Naive thymus-derived CD4-positive, alpha-beta T cell (primary cell): ENCODE measurements at regions of chr3 and their contacts with region 1.

Region 1: GRCh38 chr3:27659279-27660021 is 62.7 kb downstream of the EOMES start:
- DNase-seq: peak in 5 of 9 donors; percentile 23 to 42 (median 33)
- ATAC-seq: peak; percentile 74
- H3K4me3 ChIP-seq: no peak overlapping the region
- H3K4me3 Mint-ChIP-seq: no peak overlapping the region
- H3K27ac ChIP-seq: no peak overlapping the region
- H3K27ac Mint-ChIP-seq: no peak overlapping the region
- H3K4me1 ChIP-seq: no peaks in the 10 kb centered on the region
- H3K4me1 Mint-ChIP-seq: peaks cover 0 to 6% (median 0%) of the 10 kb centered on the region in 7 donors
- H3K27me3 ChIP-seq: no peaks in the 10 kb centered on the region
- H3K27me3 Mint-ChIP-seq: peaks cover 0 to 8% (median 0%) of the 10 kb centered on the region in 5 donors

Region 2: DNA sequence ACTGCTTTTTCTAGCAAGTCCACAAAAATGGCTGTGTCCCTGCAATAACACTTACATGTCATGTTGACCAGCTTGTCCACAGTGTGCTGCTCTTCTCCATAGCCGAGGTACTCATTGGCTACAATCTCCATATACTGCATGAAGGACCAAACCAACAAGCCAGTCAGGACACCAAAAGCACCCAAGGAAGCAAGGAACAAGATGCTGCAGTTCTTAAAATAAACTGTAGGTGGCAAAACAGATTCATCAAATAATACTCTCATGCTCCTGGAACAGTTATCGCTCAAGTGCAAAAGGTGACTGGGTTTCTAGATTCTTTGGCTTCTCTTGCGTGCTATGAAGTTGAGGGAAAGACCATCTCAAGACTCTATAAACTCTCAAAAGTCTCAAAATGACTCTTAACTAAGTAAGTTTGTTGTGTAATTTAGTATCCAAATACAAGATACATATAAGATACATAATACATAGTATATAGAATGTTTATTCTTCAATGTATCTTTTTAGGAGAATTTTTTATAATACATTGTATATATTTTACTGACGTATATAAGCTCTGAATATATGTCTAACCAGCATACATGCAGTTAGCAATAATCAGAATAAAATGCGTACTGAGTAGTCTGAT is 347.3 kb before region 1 on chr3:
- CTCF ChIA-PET with region 1: interaction called, 4 read pairs
- POLR2A ChIA-PET with region 1: no interaction called
- intact Hi-C with region 1: loop called in 1 of 2 experiments (anchors 1 kb)
- DNase-seq: peak in 7 of 9 donors; percentile 18 to 61 (median 44)
- ATAC-seq: peak; percentile 70
- H3K4me3 ChIP-seq: no peak overlapping the region
- H3K4me3 Mint-ChIP-seq: no peak overlapping the region
- H3K27ac ChIP-seq: no peak overlapping the region
- H3K27ac Mint-ChIP-seq: no peak overlapping the region
- H3K4me1 ChIP-seq: no peaks in the 10 kb centered on the region
- H3K4me1 Mint-ChIP-seq: peaks cover 0 to 4% (median 0%) of the 10 kb centered on the region in 7 donors
- H3K27me3 ChIP-seq: no peaks in the 10 kb centered on the region
- H3K27me3 Mint-ChIP-seq: peaks cover 0 to 20% (median 8%) of the 10 kb centered on the region in 5 donors

Region 3: GRCh38 chr3:27357665-27358258 is 301.7 kb before region 1 on chr3:
- CTCF ChIA-PET with region 1: no interaction called
- POLR2A ChIA-PET with region 1: no interaction called
- intact Hi-C with region 1: loop called in 1 of 2 experiments (anchors 1 kb)
- DNase-seq: peak in 8 of 9 donors; percentile 19 to 56 (median 41)
- ATAC-seq: peak; percentile 93
- H3K4me3 ChIP-seq: no peak overlapping the region
- H3K4me3 Mint-ChIP-seq: no peak overlapping the region
- H3K27ac ChIP-seq: no peak overlapping the region
- H3K27ac Mint-ChIP-seq: no peak overlapping the region
- H3K4me1 ChIP-seq: peaks cover 13 to 18% of the 10 kb centered on the region in 2 donors
- H3K4me1 Mint-ChIP-seq: peaks cover 0 to 31% (median 25%) of the 10 kb centered on the region in 7 donors
- H3K27me3 ChIP-seq: no peaks in the 10 kb centered on the region
- H3K27me3 Mint-ChIP-seq: peaks cover 0 to 20% (median 0%) of the 10 kb centered on the region in 5 donors

Region 4: DNA sequence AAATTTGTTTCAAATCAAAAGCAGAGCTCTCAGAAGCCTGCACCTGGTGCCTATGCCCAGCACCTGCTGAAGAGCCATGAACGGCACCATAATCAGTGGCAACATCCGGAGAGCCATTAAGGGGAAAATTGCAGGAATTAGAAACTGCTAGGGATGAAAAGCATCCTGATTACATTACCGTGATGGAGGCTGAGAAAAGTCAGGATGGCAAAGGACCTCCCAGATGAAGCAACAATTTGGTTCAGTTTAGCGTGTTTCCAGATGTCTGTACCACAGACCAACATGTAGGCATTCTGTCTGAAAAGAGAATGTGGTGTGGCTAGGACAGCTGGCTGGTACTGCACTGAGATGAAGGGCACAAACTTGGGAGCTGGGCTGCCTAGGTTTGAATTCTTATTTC is 43.4 kb before region 1 on chr3:
- CTCF ChIA-PET with region 1: no interaction called
- POLR2A ChIA-PET with region 1: no interaction called
- intact Hi-C with region 1: loop called in 1 of 2 experiments (anchors 5 kb)
- DNase-seq: no peak
- ATAC-seq: no peak
- H3K4me3 ChIP-seq: no peak overlapping the region
- H3K4me3 Mint-ChIP-seq: no peak overlapping the region
- H3K27ac ChIP-seq: no peak overlapping the region
- H3K27ac Mint-ChIP-seq: no peak overlapping the region
- H3K4me1 ChIP-seq: no peaks in the 10 kb centered on the region
- H3K4me1 Mint-ChIP-seq: peaks cover 0 to 2% (median 0%) of the 10 kb centered on the region in 7 donors
- H3K27me3 ChIP-seq: no peaks in the 10 kb centered on the region
- H3K27me3 Mint-ChIP-seq: peaks cover 0 to under 1% (median 0%) of the 10 kb centered on the region in 5 donors

Region 5: GRCh38 chr3:27632431-27633223 is 26.8 kb before region 1 on chr3:
- CTCF ChIA-PET with region 1: no interaction called
- POLR2A ChIA-PET with region 1: no interaction called
- intact Hi-C with region 1: loop called (anchors 1 to 5 kb)
- DNase-seq: peak; percentile 21 to 56 (median 44)
- ATAC-seq: peak; percentile 92
- H3K4me3 ChIP-seq: peak overlapping the region; percentile 77
- H3K4me3 Mint-ChIP-seq: peak overlapping the region; percentile 92 to 99 (median 95)
- H3K27ac ChIP-seq: peak overlapping the region; percentile 70
- H3K27ac Mint-ChIP-seq: peak overlapping the region; percentile 88 to 99 (median 93)
- H3K4me1 ChIP-seq: peaks cover 0 to 18% of the 10 kb centered on the region in 2 donors
- H3K4me1 Mint-ChIP-seq: peaks cover 11 to 31% (median 29%) of the 10 kb centered on the region in 7 donors
- H3K27me3 ChIP-seq: no peaks in the 10 kb centered on the region
- H3K27me3 Mint-ChIP-seq: no peaks in the 10 kb centered on the region

Region 6: DNA sequence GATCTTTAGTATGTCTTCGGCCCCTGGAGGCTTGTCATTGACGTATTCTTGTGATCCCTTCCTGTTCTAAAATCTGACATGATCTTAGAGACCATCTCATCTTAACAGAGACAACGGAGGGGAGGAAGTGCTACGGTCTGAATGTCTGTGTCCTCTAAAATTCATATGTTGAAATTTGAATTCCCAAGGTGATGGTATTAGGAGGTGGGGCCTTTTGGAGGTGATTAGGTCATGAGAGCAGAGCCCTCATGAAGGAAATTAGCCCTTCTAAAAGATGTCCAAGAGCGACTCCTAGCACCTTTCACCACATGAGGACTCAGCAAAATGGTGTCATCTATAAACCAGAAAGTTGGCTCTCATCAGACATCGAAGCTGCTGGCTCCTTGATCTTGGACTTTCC is 348.8 kb after region 1 on chr3:
- CTCF ChIA-PET with region 1: no interaction called
- POLR2A ChIA-PET with region 1: no interaction called
- intact Hi-C with region 1: no loop called
- DNase-seq: no peak
- ATAC-seq: no peak
- H3K4me3 ChIP-seq: no peak overlapping the region
- H3K4me3 Mint-ChIP-seq: no peak overlapping the region
- H3K27ac ChIP-seq: no peak overlapping the region
- H3K27ac Mint-ChIP-seq: no peak overlapping the region
- H3K4me1 ChIP-seq: no peaks in the 10 kb centered on the region
- H3K4me1 Mint-ChIP-seq: peaks cover 0 to 4% (median 0%) of the 10 kb centered on the region in 7 donors
- H3K27me3 ChIP-seq: no peaks in the 10 kb centered on the region
- H3K27me3 Mint-ChIP-seq: peaks cover 0 to 5% (median 0%) of the 10 kb centered on the region in 5 donors